Colonic mucosa (tissue), 4 donors: ENCODE measurements at regions of chr12 and their contacts with region 1.

Region 1: DNA sequence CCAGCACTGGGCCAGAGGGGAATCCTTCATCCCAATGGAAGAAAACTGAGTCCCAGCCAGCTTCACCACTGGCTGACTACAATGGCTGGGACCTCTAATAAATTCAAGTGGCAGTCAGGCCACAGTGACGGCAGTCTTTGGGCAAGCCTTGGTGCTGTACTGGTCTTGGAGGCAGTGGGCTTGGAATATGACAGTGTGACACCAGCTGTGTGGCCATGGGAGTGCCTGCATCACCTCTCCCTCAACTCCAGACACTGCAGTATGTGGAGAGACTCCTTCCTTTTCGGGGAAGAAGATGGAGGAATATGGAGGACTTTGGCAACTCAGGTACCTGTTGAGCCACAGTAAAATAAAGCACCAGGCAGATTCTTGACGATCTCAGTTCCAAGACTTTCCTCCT is 16.0 kb upstream of the CD163L1 start:
- DNase-seq: no peak
- H3K4me3 ChIP-seq: no peak overlapping the region
- H3K27ac ChIP-seq: no peak overlapping the region
- H3K4me1 ChIP-seq: no peaks in the 10 kb centered on the region
- H3K27me3 ChIP-seq: no peaks in the 10 kb centered on the region
- CTCF ChIP-seq: no peak

Region 2: GRCh38 chr12:7219599-7220243 is 240.3 kb before region 1 on chr12:
- intact Hi-C with region 1: loop called (anchors 5 kb)
- DNase-seq: peak; percentile 70
- H3K4me3 ChIP-seq: no peak overlapping the region
- H3K27ac ChIP-seq: no peak overlapping the region
- H3K4me1 ChIP-seq: no peaks in the 10 kb centered on the region
- H3K27me3 ChIP-seq: no peaks in the 10 kb centered on the region
- CTCF ChIP-seq: peak; percentile 77

Region 3: DNA sequence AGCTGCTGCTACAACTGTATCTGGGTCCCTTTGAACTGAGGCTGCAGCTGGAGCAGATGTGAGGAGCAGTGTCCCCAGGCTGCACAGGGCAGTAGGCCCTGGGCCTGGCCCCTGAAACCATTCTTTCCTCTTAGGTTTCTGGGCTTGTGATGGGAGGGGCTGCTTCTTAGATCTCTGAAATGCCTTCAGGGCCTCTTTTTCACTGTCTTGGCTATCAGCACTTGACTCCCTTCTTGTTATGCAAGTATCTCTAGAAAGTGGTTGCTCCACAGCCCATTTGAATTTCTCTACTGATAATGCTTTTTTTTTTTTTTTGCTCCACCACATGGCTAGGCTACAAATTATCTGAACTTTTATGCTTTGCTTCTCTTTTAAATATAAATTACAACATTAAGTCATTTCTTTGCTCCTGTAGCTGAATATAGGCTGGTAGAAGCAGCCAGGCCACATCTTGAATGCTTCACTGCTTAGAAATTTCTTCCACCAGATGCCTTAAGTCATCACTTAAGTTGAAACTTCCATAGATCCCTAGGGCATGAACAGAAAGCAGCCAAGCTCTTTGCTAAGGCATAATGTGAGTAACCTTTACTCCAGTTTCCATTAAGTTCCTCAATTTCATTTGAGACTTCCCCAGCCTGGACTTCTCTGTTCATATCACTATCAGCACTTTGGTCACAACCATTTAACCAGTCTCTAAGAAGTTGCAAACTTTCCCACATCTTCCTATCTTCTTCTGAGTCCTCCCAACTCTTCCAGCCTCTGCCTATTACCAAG is 115.0 kb before region 1 on chr12:
- intact Hi-C with region 1: no loop called
- DNase-seq: no peak
- H3K4me3 ChIP-seq: no peak overlapping the region
- H3K27ac ChIP-seq: no peak overlapping the region
- H3K4me1 ChIP-seq: no peaks in the 10 kb centered on the region
- H3K27me3 ChIP-seq: no peaks in the 10 kb centered on the region
- CTCF ChIP-seq: no peak

Region 4: DNA sequence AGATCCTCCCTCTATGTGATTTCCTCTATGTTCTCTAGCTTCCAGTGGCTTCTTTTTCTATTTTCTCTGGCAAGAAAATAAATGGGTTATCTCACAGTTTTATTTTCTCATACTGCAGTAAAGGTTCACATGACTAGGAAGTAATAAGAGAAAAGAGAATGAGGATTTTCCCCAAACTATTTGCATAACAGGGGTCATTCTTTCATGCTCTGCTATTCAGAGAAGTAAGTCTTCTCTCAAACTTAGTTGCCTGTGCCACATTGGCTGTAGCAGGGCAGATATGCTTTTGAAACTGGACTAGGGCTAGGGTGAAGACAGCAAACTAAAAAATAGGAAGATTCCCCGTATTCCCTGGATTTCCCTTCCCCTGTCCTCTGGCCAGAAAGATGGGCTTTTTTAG is 98.7 kb before region 1 on chr12:
- intact Hi-C with region 1: no loop called
- DNase-seq: no peak
- H3K4me3 ChIP-seq: no peak overlapping the region
- H3K27ac ChIP-seq: no peak overlapping the region
- H3K4me1 ChIP-seq: no peaks in the 10 kb centered on the region
- H3K27me3 ChIP-seq: no peaks in the 10 kb centered on the region
- CTCF ChIP-seq: no peak

Region 5: DNA sequence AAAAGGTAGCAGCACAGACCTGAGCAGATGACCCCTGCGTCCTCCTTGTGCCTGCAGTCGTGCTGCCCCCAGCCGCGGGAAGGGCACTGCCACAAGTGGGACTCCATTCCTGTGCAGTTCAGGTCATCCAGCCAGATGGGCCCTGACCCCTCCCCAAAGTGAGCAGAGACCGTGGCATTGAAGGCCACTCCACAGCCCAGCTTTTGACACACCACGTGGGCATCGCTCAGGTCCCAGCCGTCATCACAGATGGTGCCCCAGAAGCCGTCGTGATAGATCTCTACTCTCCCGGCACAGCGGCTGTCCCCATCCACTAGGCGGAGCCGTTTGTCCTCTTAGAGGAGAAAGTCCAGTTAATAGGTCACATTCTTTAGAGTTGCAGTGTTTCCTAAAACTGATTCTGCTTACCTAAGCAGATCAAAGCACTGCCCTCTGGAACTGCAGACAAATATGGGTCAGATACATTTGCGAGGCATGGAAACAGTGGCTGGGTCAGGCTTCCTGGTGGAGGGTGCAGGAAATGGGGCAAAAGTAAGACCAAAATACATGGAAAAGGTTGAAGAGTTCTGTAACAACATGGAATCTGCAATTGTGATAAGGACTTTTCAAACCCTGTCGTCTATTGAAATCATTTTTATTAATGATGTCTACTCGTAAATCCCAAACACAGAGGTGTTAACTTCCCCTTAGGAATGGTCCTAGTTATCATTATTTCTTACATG is 85.4 kb before region 1 on chr12:
- intact Hi-C with region 1: loop called (anchors 5 kb)
- DNase-seq: peak; percentile 40
- H3K4me3 ChIP-seq: no peak overlapping the region
- H3K27ac ChIP-seq: no peak overlapping the region
- H3K4me1 ChIP-seq: no peaks in the 10 kb centered on the region
- H3K27me3 ChIP-seq: no peaks in the 10 kb centered on the region
- CTCF ChIP-seq: peak; percentile 35

Region 6: DNA sequence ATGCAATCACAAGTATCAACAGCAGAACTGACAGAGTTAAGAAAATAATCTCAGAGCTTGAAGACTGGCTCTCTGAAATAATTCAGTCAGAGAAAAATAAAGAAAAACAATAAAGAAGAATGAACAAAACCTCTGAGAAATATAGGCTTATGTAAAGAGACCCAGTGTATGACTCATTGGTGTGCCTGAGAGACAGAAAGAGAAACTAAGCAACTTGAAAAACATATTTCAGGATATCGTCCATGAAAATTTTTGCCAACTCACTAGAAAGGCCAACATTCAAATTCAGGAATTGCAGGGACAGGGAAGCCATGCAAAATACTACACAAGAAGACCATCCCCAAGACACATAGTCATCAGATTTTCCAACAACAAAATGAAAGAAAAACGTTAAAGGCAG is 149.5 kb after region 1 on chr12:
- intact Hi-C with region 1: no loop called
- DNase-seq: no peak
- H3K4me3 ChIP-seq: no peak overlapping the region
- H3K27ac ChIP-seq: no peak overlapping the region
- H3K4me1 ChIP-seq: no peaks in the 10 kb centered on the region
- H3K27me3 ChIP-seq: no peaks in the 10 kb centered on the region
- CTCF ChIP-seq: no peak